Calu3 (cell line): ENCODE measurements at regions of chr6 and their contacts with region 1.

Region 1: DNA sequence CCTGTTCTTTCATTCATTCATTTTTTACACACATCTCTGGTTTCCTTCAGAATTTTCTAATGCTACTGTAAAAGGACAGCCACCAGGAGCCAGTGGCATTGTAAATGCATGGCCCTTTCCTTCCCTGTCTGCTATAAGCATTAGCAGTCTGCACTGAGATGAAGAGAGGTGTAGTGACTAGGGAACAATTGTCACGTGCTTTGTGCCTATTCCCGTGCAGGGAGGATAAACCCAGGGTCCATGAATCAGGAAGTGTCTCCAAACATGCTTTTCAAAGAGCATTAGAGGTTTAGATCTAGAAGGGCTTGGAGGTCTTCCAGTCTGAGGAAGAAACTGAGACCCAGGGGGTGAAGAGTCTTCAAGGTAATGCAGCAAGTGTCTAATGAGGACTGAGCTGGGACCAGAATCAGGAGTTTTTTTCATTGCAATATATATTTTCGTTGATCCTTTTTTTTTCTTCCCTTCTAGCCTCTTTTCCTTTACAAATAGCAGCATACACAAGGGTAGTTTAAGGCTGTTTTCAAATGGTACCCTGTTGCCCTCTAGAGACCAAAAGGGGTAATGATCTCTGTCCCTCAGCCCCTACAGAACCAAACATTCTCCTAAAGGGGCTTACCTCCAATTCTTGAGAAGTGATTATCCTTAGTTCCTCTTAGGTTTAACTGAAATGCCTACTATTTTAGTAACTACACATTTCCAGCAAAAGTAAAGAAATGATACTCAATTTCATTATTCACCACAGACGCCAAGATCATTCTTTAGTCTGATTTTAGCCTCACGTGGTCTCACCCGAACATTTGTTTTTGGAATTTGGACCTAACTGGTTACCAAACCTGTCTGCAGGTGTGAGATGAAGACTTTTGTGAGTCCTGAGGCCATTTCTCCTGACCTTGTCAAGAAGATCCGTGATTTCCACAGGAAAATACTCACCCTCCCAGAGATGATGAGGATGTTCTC is 6.6 kb downstream of the TRIM15 start:
- DNase-seq: peak; percentile 46
- H3K4me3 Mint-ChIP-seq: no peak overlapping the region
- H3K27ac Mint-ChIP-seq: no peak overlapping the region
- H3K4me1 Mint-ChIP-seq: peaks cover 13% of the 10 kb centered on the region
- H3K27me3 Mint-ChIP-seq: no peaks in the 10 kb centered on the region
- CTCF ChIP-seq: peak; percentile 77

Region 2: DNA sequence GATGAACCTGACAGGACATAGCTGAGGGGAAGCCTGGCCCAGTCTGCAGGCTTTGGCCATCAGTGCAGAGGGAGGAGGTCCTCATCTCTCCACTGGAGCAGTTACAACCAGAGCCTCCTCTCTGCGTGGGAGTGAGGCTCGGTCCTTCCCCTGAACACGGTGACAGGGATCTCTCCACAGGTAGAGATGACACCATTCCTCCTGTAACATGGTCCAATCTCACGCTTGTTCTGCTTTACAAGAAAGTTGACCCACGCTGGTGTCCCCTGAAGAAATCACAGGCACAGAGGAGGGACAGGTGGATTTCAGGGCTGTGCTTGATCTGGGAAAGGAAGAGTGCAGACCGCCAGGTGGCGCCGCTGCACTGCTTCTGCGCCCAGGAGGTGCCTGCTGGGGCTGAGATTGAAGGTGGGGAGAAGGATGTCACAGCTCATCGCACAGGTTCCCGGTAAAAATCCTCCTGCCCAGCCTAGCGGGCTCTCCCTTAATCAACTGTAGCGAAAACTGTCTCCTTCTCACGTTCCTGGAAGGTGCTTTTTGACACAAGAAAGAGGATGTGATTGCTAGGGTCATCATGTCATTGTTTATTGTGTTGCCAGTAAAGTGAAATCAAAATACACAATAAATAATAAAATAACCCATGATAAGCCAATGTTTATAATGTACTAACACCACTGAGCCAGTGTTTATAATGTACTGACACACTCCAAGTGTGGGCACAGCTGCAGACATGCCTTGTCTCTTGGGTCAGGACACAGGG is 321.9 kb before region 1 on chr6:
- CTCF ChIA-PET with region 1: no interaction called
- intact Hi-C with region 1: loop called (anchors 2 kb)
- DNase-seq: peak; percentile 91
- H3K4me3 Mint-ChIP-seq: no peak overlapping the region
- H3K27ac Mint-ChIP-seq: no peak overlapping the region
- H3K4me1 Mint-ChIP-seq: peaks cover 30% of the 10 kb centered on the region
- H3K27me3 Mint-ChIP-seq: peaks cover 55% of the 10 kb centered on the region
- CTCF ChIP-seq: peak; percentile 97

Region 3: DNA sequence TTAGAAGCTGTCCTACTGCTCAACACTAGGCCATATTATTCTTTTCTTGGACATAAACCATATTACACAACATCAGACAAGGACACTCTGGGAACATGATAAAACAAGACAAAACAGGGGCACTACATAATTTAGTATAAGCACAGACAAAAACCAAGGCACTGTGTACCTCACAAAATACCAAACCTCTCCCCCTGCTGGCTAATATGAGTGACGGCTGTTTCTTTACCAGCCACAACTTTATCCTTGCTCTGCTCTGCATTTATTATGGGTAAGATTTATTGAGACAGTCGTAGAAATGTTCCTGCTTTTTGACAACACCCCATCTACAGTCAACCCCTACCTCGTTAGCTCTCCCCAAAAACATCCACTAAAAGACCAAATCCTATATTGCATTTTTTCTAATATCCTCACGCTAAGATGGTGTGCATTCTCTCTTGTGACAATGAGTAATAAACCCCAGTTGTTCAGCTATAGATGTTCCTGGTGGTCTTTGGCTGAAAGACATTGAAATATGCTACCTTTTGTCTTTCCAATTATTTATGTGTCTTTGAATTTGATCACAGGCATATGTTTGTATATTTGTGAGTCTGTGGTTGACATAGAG is 132.7 kb before region 1 on chr6:
- CTCF ChIA-PET with region 1: no interaction called
- intact Hi-C with region 1: loop called (anchors 5 kb)
- DNase-seq: no peak
- H3K4me3 Mint-ChIP-seq: no peak overlapping the region
- H3K27ac Mint-ChIP-seq: no peak overlapping the region
- H3K4me1 Mint-ChIP-seq: no peaks in the 10 kb centered on the region
- H3K27me3 Mint-ChIP-seq: no peaks in the 10 kb centered on the region
- CTCF ChIP-seq: peak; percentile 81

Region 4: GRCh38 chr6:30102970-30103874 is 66.7 kb before region 1 on chr6:
- CTCF ChIA-PET with region 1: interaction called, 3 read pairs
- intact Hi-C with region 1: loop called (anchors 1 kb)
- DNase-seq: peak; percentile 90
- H3K4me3 Mint-ChIP-seq: peak overlapping the region; percentile 87
- H3K27ac Mint-ChIP-seq: peak overlapping the region; percentile 70
- H3K4me1 Mint-ChIP-seq: peaks cover 61% of the 10 kb centered on the region
- H3K27me3 Mint-ChIP-seq: no peaks in the 10 kb centered on the region
- CTCF ChIP-seq: peak; percentile 94

Region 5: GRCh38 chr6:30130887-30131862 is 38.8 kb before region 1 on chr6:
- CTCF ChIA-PET with region 1: interaction called, 4 read pairs
- intact Hi-C with region 1: loop called (anchors 2 kb)
- DNase-seq: peak; percentile 79
- H3K4me3 Mint-ChIP-seq: peak overlapping the region; percentile 33
- H3K27ac Mint-ChIP-seq: peak overlapping the region; percentile 46
- H3K4me1 Mint-ChIP-seq: peaks cover 47% of the 10 kb centered on the region
- H3K27me3 Mint-ChIP-seq: no peaks in the 10 kb centered on the region
- CTCF ChIP-seq: peak; percentile 97

Region 6: GRCh38 chr6:30150671-30151395 is 19.1 kb before region 1 on chr6:
- CTCF ChIA-PET with region 1: no interaction called
- intact Hi-C with region 1: loop called (anchors 2 kb)
- DNase-seq: no peak
- H3K4me3 Mint-ChIP-seq: no peak overlapping the region
- H3K27ac Mint-ChIP-seq: no peak overlapping the region
- H3K4me1 Mint-ChIP-seq: peaks cover 42% of the 10 kb centered on the region
- H3K27me3 Mint-ChIP-seq: no peaks in the 10 kb centered on the region
- CTCF ChIP-seq: no peak